Mammary epithelial cell (primary cell): ENCODE measurements at regions of chr17 and their contacts with region 1.

Region 1: GRCh38 chr17:51479303-51479702 is 219.0 kb downstream of the UTP18 start:
- DNase-seq: no peak
- H3K4me3 ChIP-seq: no peak overlapping the region
- H3K27ac ChIP-seq: no peak overlapping the region
- H3K4me1 ChIP-seq: no peaks in the 10 kb centered on the region
- H3K27me3 ChIP-seq: peaks cover 8% of the 10 kb centered on the region
- CTCF ChIP-seq: no peak

Region 2: GRCh38 chr17:52071712-52072111 is 592.4 kb after region 1 on chr17:
- CTCF ChIA-PET with region 1: no interaction called
- dilution Hi-C with region 1: loop called (anchors 5 kb)
- in situ Hi-C with region 1: no loop called
- intact Hi-C with region 1: no loop called
- DNase-seq: no peak
- H3K4me3 ChIP-seq: no peak overlapping the region
- H3K27ac ChIP-seq: no peak overlapping the region
- H3K4me1 ChIP-seq: no peaks in the 10 kb centered on the region
- H3K27me3 ChIP-seq: peaks cover 2% of the 10 kb centered on the region
- CTCF ChIP-seq: no peak